A673 (cell line): ENCODE measurements at regions of chr22 and their contacts with region 1.

Region 1: GRCh38 chr22:42369245-42370041 is 62.8 kb downstream of the NFAM1 start:
- DNase-seq: peak; percentile 95
- H3K4me3 ChIP-seq: peak overlapping the region; percentile 65
- H3K27ac ChIP-seq: no peak overlapping the region
- H3K4me1 ChIP-seq: peaks cover 45% of the 10 kb centered on the region
- H3K27me3 ChIP-seq: peaks cover 5% of the 10 kb centered on the region
- CTCF ChIP-seq: no peak

Region 2: GRCh38 chr22:42052765-42053164 is 316.7 kb before region 1 on chr22:
- CTCF ChIA-PET with region 1: no interaction called
- POLR2A ChIA-PET with region 1: no interaction called
- intact Hi-C with region 1: no loop called
- DNase-seq: no peak
- H3K4me3 ChIP-seq: no peak overlapping the region
- H3K27ac ChIP-seq: no peak overlapping the region
- H3K4me1 ChIP-seq: no peaks in the 10 kb centered on the region
- H3K27me3 ChIP-seq: no peaks in the 10 kb centered on the region
- CTCF ChIP-seq: no peak

Region 3: DNA sequence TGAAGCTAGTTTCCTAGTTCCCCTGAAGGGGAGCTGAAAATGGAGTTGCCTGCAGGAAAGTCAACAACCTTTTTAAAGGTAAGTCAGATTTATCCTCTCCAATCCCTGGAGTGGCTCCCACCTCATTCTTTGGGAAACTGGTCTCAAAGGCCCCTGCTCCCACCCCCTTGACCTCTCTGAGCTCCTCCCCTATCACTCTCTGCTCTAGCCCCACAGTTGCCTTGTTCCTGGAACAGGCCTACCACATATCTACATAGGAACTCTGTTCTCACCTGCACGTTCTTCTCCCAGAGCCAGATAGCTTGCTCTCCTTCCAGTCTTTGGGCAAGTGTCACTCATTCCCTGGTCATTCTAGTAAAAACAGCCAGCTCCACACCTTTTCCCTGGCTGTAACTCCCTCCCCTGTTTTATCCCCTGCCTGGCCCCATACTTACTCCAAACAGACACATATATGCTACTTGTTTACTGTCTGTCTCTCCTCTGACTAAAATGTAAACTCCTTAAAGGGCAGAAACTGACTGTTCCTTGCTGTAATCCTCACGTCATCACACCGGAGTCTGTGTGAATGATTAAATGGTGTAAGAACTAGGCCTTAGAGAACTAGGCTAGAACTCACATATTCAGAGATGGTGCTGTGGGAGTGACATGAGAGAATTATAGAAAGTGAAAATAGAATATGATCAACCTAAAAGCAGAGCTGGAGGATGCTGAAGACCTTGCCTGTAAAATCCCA is 152.3 kb before region 1 on chr22:
- CTCF ChIA-PET with region 1: no interaction called
- POLR2A ChIA-PET with region 1: no interaction called
- intact Hi-C with region 1: no loop called
- DNase-seq: no peak
- H3K4me3 ChIP-seq: no peak overlapping the region
- H3K27ac ChIP-seq: no peak overlapping the region
- H3K4me1 ChIP-seq: peaks cover 10% of the 10 kb centered on the region
- H3K27me3 ChIP-seq: no peaks in the 10 kb centered on the region
- CTCF ChIP-seq: no peak

Region 4: GRCh38 chr22:42270512-42271417 is 98.7 kb before region 1 on chr22 and contains the start of gene TCF20:
- CTCF ChIA-PET with region 1: no interaction called
- POLR2A ChIA-PET with region 1: no interaction called
- intact Hi-C with region 1: loop called (anchors 5 kb)
- DNase-seq: peak; percentile 88
- H3K4me3 ChIP-seq: peak within 1 kb of the TSS; percentile 98
- H3K27ac ChIP-seq: peak within 1 kb of the TSS; percentile 81
- H3K4me1 ChIP-seq: peaks cover 22% of the 10 kb centered on the region
- H3K27me3 ChIP-seq: no peaks in the 10 kb centered on the region
- CTCF ChIP-seq: no peak
- total RNA-seq, gene TCF20: 69.3 and 77.8 TPM in 2 replicates

Region 5: GRCh38 chr22:42277988-42278776 is 91.3 kb before region 1 on chr22:
- CTCF ChIA-PET with region 1: no interaction called
- POLR2A ChIA-PET with region 1: interaction called, 12 read pairs
- intact Hi-C with region 1: loop called (anchors 5 kb)
- DNase-seq: peak; percentile 60
- H3K4me3 ChIP-seq: no peak overlapping the region
- H3K27ac ChIP-seq: no peak overlapping the region
- H3K4me1 ChIP-seq: peaks cover 24% of the 10 kb centered on the region
- H3K27me3 ChIP-seq: no peaks in the 10 kb centered on the region
- CTCF ChIP-seq: peak; percentile 48

Region 6: DNA sequence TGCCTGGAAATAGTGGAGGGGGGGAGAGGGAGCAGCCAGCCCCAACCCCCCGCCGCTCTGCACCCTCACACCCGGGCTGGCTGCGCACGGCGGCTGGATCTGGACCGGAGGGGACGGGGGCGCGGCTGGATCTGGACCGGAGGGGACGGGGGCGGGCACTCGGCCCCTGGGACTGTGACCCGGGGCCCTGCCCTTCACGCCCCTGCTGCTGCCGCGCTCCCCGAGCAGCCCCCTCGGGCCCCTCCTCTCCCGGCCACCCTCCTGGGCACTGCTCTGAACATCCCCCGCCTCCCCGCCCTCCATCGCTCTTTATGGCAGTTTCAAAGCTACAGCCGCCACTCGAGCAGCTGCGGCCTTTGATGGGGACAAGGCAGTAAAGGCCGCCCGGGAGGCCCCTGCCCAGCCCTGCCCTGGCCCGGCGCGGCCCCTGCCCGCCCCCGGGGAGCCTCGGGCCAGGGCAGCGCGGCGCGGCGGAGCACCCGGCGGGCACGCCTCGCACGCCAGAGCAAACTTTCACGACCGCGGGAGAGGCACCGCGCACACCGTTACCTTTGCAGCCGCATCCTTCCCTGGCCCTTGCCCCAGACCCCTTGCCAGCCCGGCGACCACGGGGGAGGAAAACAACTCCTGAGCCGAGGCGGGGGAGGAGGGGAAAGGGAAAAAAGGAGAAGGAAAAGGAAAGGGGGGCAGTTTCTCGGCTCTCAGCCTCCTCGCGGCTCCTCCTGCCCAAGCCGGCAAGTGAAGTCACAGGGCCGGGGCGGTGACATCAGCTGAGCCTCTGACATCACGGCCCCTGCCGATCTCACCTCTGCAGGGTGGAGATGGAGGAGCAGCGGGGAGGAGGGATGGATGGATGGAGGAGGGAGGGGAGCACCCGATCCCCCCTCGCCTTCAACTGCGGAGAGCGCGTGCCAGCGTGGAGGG is 85.9 kb before region 1 on chr22:
- CTCF ChIA-PET with region 1: no interaction called
- POLR2A ChIA-PET with region 1: interaction called, 12 read pairs
- intact Hi-C with region 1: no loop called
- DNase-seq: no peak
- H3K4me3 ChIP-seq: peak overlapping the region; percentile 17
- H3K27ac ChIP-seq: no peak overlapping the region
- H3K4me1 ChIP-seq: no peaks in the 10 kb centered on the region
- H3K27me3 ChIP-seq: no peaks in the 10 kb centered on the region
- CTCF ChIP-seq: no peak

Region 7: GRCh38 chr22:43370036-43370435 is 1000.6 kb after region 1 on chr22:
- CTCF ChIA-PET with region 1: no interaction called
- POLR2A ChIA-PET with region 1: no interaction called
- intact Hi-C with region 1: no loop called
- DNase-seq: no peak
- H3K4me3 ChIP-seq: no peak overlapping the region
- H3K27ac ChIP-seq: no peak overlapping the region
- H3K4me1 ChIP-seq: no peaks in the 10 kb centered on the region
- H3K27me3 ChIP-seq: peaks cover 44% of the 10 kb centered on the region
- CTCF ChIP-seq: no peak